PC-9 (cell line): ENCODE measurements at regions of chr2 and their contacts with region 1.

Region 1: GRCh38 chr2:138071720-138072719 is 107.7 kb downstream of the HNMT start:
- DNase-seq: peak; percentile 73 to 96
- H3K4me3 ChIP-seq: peak overlapping the region; percentile 15; the same call in 1 of the 2 replicates
- H3K27ac ChIP-seq: peak overlapping the region; percentile 66
- H3K4me1 ChIP-seq: peaks cover 28% of the 10 kb centered on the region
- H3K27me3 ChIP-seq: no peaks in the 10 kb centered on the region
- CTCF ChIP-seq: no peak

Region 2: GRCh38 chr2:137928547-137929518 is 143.2 kb before region 1 on chr2:
- CTCF ChIA-PET with region 1: no interaction called
- POLR2A ChIA-PET with region 1: no interaction called
- intact Hi-C with region 1: loop called (anchors 5 kb)
- DNase-seq: peak; percentile 21 to 77
- H3K4me3 ChIP-seq: no peak overlapping the region
- H3K27ac ChIP-seq: no peak overlapping the region
- H3K4me1 ChIP-seq: peaks cover 12% of the 10 kb centered on the region; the same call in 1 of the 2 replicates
- H3K27me3 ChIP-seq: no peaks in the 10 kb centered on the region
- CTCF ChIP-seq: no peak

Region 3: DNA sequence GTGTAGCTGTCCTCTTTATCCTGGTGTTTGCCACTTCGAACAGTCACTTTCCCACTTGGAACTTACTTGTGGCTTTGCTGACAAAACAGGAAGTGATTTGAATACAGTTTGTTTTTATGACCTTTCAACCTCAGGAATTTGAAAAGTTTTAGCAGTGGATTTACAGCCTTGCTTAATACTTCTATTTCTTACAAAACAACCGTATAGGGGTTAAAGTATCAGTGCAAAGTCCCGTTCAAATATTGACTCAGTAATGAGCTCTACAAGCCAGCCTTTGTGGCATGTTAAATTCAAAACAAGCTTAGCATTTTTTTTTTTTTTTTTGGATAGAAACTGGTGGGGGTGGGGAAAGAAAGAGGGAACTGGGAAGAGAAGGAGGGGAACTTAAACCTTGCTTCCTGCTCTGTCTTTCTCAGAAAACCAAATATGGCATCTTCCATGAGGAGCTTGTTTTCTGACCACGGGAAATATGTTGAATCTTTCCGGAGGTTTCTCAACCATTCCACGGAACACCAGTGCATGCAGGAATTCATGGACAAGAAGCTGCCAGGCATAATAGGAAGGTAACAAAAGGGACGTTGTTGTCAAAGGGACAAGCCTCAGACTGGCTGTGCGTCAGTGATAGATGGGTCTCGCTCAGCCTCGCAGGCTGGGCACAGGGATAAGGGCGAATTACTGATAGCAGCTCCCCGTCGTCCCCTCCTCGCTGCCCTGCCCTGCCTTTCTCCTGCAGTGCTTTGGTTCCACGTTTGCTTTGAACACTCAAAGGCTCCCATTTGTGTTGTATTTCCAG is 107.8 kb before region 1 on chr2 and contains the start of gene HNMT:
- CTCF ChIA-PET with region 1: no interaction called
- POLR2A ChIA-PET with region 1: interaction called, 14 read pairs
- intact Hi-C with region 1: loop called (anchors 1 kb)
- DNase-seq: peak; percentile 41 to 95
- H3K4me3 ChIP-seq: peak within 1 kb of the TSS; percentile 59
- H3K27ac ChIP-seq: peak within 1 kb of the TSS; percentile 85
- H3K4me1 ChIP-seq: peaks cover 45% of the 10 kb centered on the region
- H3K27me3 ChIP-seq: no peaks in the 10 kb centered on the region
- CTCF ChIP-seq: no peak
- total RNA-seq, gene HNMT: 16.6 TPM in 2 replicates

Region 4: DNA sequence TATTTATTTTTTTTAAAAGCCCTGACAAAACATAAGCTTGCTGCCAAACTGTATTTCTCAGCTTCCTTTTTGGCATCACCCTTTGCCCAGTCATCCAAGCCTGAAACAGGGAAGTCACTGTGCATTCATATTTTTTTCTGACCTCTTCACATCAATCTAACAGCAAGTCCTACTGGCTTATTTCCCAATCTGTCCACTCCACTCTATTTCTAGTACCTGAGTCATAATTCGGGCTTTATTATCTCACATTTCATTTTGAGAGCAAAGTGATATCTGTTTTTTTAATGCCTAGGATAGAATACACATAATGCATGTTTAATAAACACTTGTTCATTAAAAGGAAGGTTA is 102.6 kb before region 1 on chr2:
- CTCF ChIA-PET with region 1: no interaction called
- POLR2A ChIA-PET with region 1: no interaction called
- intact Hi-C with region 1: loop called (anchors 1 kb)
- DNase-seq: peak in 1 of 2 experiments; percentile 90
- H3K4me3 ChIP-seq: peak overlapping the region; percentile 4; the same call in 1 of the 2 replicates
- H3K27ac ChIP-seq: peak overlapping the region; percentile 80
- H3K4me1 ChIP-seq: peaks cover 49% of the 10 kb centered on the region
- H3K27me3 ChIP-seq: no peaks in the 10 kb centered on the region
- CTCF ChIP-seq: no peak

Region 5: DNA sequence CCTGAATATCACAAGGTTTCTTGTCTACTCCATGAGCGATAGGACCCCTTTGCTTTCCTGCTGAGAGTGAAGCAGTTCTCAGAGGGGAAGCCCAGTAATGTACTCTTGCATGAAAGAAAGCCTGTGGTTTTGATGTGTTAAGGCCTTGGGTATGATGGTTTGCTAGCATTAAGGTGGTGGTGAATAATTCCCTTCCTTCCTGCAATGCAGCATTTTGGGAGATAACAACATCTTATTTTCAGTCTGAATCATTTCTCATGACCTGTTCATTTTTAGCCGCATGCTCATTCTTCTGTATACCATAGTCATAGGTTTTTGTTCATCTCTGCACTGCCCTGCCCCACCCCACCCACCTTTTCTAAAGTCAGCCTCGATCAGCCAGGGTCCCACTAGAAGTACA is 41.6 kb before region 1 on chr2:
- CTCF ChIA-PET with region 1: no interaction called
- POLR2A ChIA-PET with region 1: no interaction called
- intact Hi-C with region 1: no loop called
- DNase-seq: no peak
- H3K4me3 ChIP-seq: no peak overlapping the region
- H3K27ac ChIP-seq: no peak overlapping the region
- H3K4me1 ChIP-seq: 0 out of 2 replicates have a peak, but pooled peaks cover 6% of the 10 kb centered on the region
- H3K27me3 ChIP-seq: no peaks in the 10 kb centered on the region
- CTCF ChIP-seq: no peak

Region 6: DNA sequence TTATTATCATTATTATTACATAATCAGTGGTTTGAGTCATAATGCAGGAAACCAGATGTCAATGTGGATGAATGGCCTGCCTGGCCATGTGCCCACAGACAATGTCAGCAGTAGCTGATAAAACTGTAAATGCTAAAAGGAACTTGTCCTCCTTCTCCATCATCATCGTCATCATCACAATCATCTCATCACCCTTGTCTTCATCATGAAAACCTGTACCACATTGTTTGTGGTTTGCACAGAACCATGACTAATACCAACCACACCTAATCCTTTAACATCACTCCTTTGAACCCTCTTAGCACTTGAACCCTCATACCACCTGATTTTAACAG is 11.8 kb before region 1 on chr2:
- CTCF ChIA-PET with region 1: no interaction called
- POLR2A ChIA-PET with region 1: no interaction called
- intact Hi-C with region 1: loop called (anchors 1 kb)
- DNase-seq: peak; percentile 67 to 89
- H3K4me3 ChIP-seq: no peak overlapping the region
- H3K27ac ChIP-seq: no peak overlapping the region
- H3K4me1 ChIP-seq: peaks cover 16% of the 10 kb centered on the region
- H3K27me3 ChIP-seq: no peaks in the 10 kb centered on the region
- CTCF ChIP-seq: no peak

Region 7: DNA sequence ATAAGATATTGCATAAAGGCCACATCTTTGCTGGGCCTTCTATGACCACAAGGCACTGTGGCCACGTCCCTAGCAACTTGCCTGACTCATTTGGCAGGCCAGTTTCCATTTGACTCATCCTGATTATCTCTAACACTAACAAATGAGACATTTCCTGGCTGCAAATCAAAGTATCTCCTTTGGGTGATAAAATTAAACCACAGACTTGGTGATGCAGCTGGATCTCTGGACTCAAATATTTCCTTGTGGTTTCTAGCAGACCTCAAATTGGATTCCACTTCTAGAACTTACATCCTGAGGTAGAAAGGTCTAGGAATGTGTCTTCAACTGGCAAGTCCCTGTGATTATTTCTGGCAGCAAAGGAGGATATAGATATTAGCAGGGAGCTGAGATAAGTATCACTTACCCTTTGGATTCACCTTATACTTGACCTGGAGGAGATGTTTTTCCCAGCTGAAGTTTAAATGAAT is 876.1 kb after region 1 on chr2:
- CTCF ChIA-PET with region 1: no interaction called
- POLR2A ChIA-PET with region 1: no interaction called
- intact Hi-C with region 1: loop called (anchors 2 kb)
- DNase-seq: peak; percentile 64 to 78
- H3K4me3 ChIP-seq: no peak overlapping the region
- H3K27ac ChIP-seq: peak overlapping the region; percentile 82
- H3K4me1 ChIP-seq: peaks cover 26% of the 10 kb centered on the region
- H3K27me3 ChIP-seq: no peaks in the 10 kb centered on the region
- CTCF ChIP-seq: no peak